ENCODE measurements at regions of chr12 and their contacts with region 1.

Region 1: DNA sequence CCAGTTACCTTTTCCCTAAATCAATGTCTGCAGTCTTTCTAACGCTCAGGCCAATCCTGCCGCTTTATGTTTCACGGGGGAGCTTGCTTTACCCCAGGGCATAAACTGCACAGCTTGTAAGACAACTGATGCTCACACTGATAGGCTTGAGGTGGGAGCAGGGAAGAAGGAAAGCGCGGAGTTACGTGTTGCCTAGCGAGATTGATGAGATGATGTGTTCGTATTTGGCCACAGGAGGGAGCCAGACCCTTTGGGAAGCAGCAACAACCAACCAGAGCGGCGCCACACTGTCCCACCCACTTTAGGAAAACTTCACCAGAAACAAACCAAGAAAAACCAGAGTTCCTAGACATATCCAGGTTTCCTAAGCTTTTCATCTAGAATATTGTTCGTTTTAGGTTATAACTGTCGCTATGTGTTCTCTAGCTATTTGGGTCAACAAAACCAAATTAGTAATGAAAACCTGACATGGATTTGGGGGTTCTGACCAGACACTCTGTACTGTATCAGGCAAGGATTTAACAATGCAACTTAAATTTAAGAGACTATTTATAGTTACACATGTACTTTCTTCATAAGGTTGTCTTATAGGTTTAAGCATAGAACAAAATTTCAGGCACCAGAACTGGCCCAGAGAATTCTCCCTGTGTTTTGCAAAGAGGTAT is 2.4 kb downstream of the IL26 start:
- DNase-seq: peak; percentile 79
- H3K4me3 ChIP-seq: no peak overlapping the region
- H3K4me3 Mint-ChIP-seq: no peak overlapping the region
- H3K27ac Mint-ChIP-seq: no peak overlapping the region
- H3K4me1 ChIP-seq: no peaks in the 10 kb centered on the region
- H3K4me1 Mint-ChIP-seq: no peaks in the 10 kb centered on the region
- H3K27me3 ChIP-seq: no peaks in the 10 kb centered on the region; the same call in 1 of the 2 replicates
- H3K27me3 Mint-ChIP-seq: peaks cover 14% of the 10 kb centered on the region
- CTCF ChIP-seq: peak; percentile 87

Region 2: DNA sequence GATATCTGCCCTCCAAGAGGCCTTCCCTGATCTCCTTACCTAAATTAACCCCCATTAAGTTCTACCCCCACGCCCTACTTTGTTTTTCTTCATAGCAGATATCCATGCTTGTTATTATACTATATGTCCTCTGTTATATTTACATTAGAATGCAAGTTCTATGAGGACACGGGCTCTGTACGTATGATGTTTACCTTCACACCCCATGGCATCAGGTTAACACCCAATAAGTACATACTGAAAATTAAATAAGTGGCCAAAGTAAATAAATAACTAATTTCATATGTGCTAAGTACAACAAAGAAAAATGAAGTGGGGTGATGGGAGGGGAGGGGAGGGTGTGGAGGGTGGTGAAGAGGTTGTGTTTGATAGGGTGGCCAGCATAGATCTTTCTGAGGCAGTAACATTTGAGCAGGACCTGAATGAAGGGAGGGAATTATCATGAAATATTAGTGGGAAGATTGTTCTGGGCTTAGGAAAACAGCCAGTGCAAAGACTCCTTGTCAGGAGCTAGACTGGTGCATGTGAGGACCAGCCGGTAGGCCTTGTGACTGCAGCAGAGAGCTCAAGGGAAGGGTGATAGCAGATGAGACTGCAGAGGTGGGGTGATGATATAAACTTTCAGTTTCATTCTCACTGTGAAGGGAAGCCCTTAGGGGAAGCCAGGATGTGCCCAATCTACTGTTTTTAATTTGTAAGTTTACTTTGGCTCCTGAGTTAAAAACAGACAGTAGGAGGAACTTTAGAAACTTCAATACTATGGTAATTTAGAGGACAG is 17.6 kb after region 1 on chr12:
- CTCF ChIA-PET with region 1: no interaction called
- POLR2A ChIA-PET with region 1: no interaction called
- intact Hi-C with region 1: loop called (anchors 2 kb)
- DNase-seq: no peak
- H3K4me3 ChIP-seq: no peak overlapping the region
- H3K4me3 Mint-ChIP-seq: no peak overlapping the region
- H3K27ac Mint-ChIP-seq: no peak overlapping the region
- H3K4me1 ChIP-seq: no peaks in the 10 kb centered on the region
- H3K4me1 Mint-ChIP-seq: peaks cover 7% of the 10 kb centered on the region
- H3K27me3 ChIP-seq: no peaks in the 10 kb centered on the region
- H3K27me3 Mint-ChIP-seq: peaks cover 4% of the 10 kb centered on the region
- CTCF ChIP-seq: no peak

Region 3: GRCh38 chr12:68317047-68317667 is 93.9 kb after region 1 on chr12:
- CTCF ChIA-PET with region 1: interaction called, 4 read pairs
- POLR2A ChIA-PET with region 1: no interaction called
- intact Hi-C with region 1: loop called (anchors 1 kb)
- DNase-seq: peak in 1 of 2 experiments; percentile 35
- H3K4me3 ChIP-seq: no peak overlapping the region
- H3K4me3 Mint-ChIP-seq: no peak overlapping the region
- H3K27ac Mint-ChIP-seq: no peak overlapping the region
- H3K4me1 ChIP-seq: no peaks in the 10 kb centered on the region
- H3K4me1 Mint-ChIP-seq: no peaks in the 10 kb centered on the region
- H3K27me3 ChIP-seq: no peaks in the 10 kb centered on the region
- H3K27me3 Mint-ChIP-seq: no peaks in the 10 kb centered on the region
- CTCF ChIP-seq: peak; percentile 62 to 68

Region 4: GRCh38 chr12:68610370-68611093 is 387.3 kb after region 1 on chr12 and contains the start of gene RAP1B:
- CTCF ChIA-PET with region 1: no interaction called
- POLR2A ChIA-PET with region 1: no interaction called
- intact Hi-C with region 1: loop called (anchors 10 kb)
- DNase-seq: peak; percentile 91
- H3K4me3 ChIP-seq: peak within 1 kb of the TSS; percentile 92
- H3K4me3 Mint-ChIP-seq: peak within 1 kb of the TSS; percentile 76
- H3K27ac Mint-ChIP-seq: peak within 1 kb of the TSS; percentile 91
- H3K4me1 ChIP-seq: peaks cover 50% of the 10 kb centered on the region
- H3K4me1 Mint-ChIP-seq: peaks cover 29% of the 10 kb centered on the region
- H3K27me3 ChIP-seq: no peaks in the 10 kb centered on the region
- H3K27me3 Mint-ChIP-seq: no peaks in the 10 kb centered on the region
- CTCF ChIP-seq: no peak
- total RNA-seq, gene RAP1B: 216 and 239 TPM in 2 replicates

Region 5: GRCh38 chr12:68665016-68665569 is 441.9 kb after region 1 on chr12:
- CTCF ChIA-PET with region 1: no interaction called
- POLR2A ChIA-PET with region 1: no interaction called
- intact Hi-C with region 1: loop called (anchors 10 kb)
- DNase-seq: peak in 1 of 2 experiments; percentile 8
- H3K4me3 ChIP-seq: no peak overlapping the region
- H3K4me3 Mint-ChIP-seq: no peak overlapping the region
- H3K27ac Mint-ChIP-seq: no peak overlapping the region
- H3K4me1 ChIP-seq: no peaks in the 10 kb centered on the region
- H3K4me1 Mint-ChIP-seq: peaks cover 6% of the 10 kb centered on the region
- H3K27me3 ChIP-seq: no peaks in the 10 kb centered on the region
- H3K27me3 Mint-ChIP-seq: no peaks in the 10 kb centered on the region
- CTCF ChIP-seq: peak in 1 of 2 experiments; percentile 3